ENCODE measurements at regions of chrX and their contacts with region 1.

Region 1: DNA sequence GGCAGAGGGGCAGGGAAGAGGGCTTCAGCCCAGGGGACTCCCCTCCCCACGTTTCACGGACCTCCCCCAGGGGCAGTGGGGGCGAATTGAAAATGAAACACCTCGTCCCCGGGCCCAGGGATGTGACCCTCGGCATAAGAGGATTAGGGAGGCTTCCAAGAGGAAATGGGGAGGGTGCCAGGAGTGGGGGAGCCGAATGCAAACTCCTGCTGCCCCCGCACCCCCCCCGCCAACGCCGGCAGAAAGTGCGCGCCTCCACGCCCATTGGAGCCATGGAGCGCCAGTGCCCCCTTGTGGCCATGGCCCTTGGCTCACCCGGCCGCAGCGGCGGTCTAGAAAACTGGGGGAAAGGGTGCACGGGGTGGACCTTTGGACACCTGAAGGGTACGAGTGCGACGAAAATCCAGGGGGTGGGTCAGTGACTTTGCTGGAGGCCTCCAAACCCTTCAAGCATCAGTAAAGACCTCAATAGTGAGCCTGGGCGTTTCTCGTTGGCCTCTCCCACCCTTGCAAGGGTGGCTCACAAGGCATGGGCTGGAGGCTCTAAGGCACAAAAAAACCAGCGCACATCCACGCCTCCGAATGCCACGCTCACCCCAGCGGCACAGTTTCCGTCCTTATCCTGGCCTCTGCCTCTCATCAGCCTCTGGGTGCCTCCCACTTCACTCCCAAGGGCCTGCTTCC is 120.8 kb upstream of the PJA1 start:
- DNase-seq: peak; percentile 57
- ATAC-seq: peak; percentile 78
- H3K4me3 ChIP-seq: peak overlapping the region; percentile 61
- H3K27ac ChIP-seq: no peak overlapping the region
- H3K4me1 ChIP-seq: peaks cover 4% of the 10 kb centered on the region; the same call in 1 of the 2 replicates
- H3K27me3 ChIP-seq: no peaks in the 10 kb centered on the region
- CTCF ChIP-seq: peak; percentile 83

Region 2: DNA sequence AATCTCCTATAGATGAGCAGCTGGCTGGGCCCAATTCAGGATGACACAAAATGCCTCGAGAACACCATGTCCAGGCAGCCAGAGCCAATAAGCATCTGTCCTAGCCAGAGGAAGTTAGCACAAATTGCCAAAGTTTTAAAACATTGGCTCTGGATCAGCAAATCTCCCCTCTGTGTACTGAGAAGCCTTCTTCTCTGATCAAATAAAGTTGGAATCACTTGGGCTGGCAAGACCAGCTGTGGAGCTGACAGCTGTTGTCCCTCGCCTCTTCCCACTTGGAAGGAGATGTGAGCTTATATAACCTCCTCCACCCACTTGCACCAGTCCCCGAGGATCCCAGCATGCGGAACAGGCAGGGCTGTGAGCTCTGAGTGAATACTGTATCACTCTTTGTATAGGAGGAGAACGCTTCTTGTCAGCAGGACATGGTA is 1036.6 kb before region 1 on chrX:
- CTCF ChIA-PET with region 1: no interaction called
- POLR2A ChIA-PET with region 1: no interaction called
- intact Hi-C with region 1: no loop called
- DNase-seq: no peak
- ATAC-seq: no peak
- H3K4me3 ChIP-seq: no peak overlapping the region
- H3K27ac ChIP-seq: no peak overlapping the region
- H3K4me1 ChIP-seq: peaks cover 1% of the 10 kb centered on the region; the same call in 1 of the 2 replicates
- H3K27me3 ChIP-seq: no peaks in the 10 kb centered on the region
- CTCF ChIP-seq: no peak

Region 3: GRCh38 chrX:68822641-68823410 is 463.2 kb before region 1 on chrX:
- CTCF ChIA-PET with region 1: interaction called, 3 read pairs
- POLR2A ChIA-PET with region 1: no interaction called
- intact Hi-C with region 1: loop called (anchors 1 kb)
- DNase-seq: peak; percentile 67
- ATAC-seq: peak; percentile 79
- H3K4me3 ChIP-seq: no peak overlapping the region
- H3K27ac ChIP-seq: no peak overlapping the region
- H3K4me1 ChIP-seq: peaks cover 9% of the 10 kb centered on the region; the same call in 1 of the 2 replicates
- H3K27me3 ChIP-seq: no peaks in the 10 kb centered on the region
- CTCF ChIP-seq: peak; percentile 74

Region 4: DNA sequence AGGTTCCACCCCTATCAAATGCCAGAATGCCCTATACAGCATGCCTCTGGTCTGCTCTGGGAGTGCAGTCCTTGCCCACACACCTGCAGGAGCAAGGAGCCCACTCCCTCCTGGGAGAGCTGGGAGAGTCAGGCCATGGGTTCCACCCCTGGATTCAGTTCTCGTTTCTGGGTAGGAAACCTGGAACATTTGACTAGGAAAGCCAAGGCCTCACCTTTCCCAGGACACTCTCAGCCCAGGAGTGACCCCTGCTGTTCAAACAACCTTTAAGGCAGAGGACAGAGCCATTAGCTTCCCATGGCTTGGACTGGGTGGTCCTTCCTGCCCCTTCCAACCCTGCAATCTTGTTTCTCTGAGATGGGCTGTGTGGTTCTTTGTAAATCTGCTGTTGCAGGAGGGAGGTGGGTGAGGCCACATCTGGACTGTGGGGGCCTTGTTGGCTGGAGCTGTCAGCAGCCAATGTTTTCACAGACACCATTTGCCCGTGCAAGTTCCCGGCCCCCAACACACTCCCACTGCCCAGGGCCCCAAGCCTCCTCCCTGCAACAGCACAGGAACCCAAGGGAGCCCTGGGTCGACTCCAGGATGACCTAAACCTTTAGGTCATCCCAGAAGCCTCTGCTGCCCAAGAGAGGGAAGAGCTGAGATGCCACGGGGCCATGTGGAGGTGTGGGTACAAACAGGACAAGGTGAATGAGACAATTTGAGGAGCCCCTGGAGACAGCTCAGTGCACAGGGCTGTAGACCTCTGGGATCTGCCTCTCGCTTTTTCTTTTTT is 225.2 kb before region 1 on chrX:
- CTCF ChIA-PET with region 1: no interaction called
- POLR2A ChIA-PET with region 1: no interaction called
- intact Hi-C with region 1: no loop called
- DNase-seq: peak; percentile 61
- ATAC-seq: peak; percentile 86
- H3K4me3 ChIP-seq: no peak overlapping the region
- H3K27ac ChIP-seq: no peak overlapping the region
- H3K4me1 ChIP-seq: peaks cover 4% of the 10 kb centered on the region; the same call in 1 of the 2 replicates
- H3K27me3 ChIP-seq: no peaks in the 10 kb centered on the region
- CTCF ChIP-seq: peak; percentile 58

Region 5: GRCh38 chrX:69133921-69134542 is 152.0 kb before region 1 on chrX:
- CTCF ChIA-PET with region 1: no interaction called
- POLR2A ChIA-PET with region 1: no interaction called
- intact Hi-C with region 1: loop called (anchors 1 kb)
- DNase-seq: peak; percentile 79
- ATAC-seq: peak; percentile 97
- H3K4me3 ChIP-seq: no peak overlapping the region
- H3K27ac ChIP-seq: no peak overlapping the region
- H3K4me1 ChIP-seq: no peaks in the 10 kb centered on the region
- H3K27me3 ChIP-seq: no peaks in the 10 kb centered on the region
- CTCF ChIP-seq: peak; percentile 85

Measured in PC-3 (cell line).